Sigmoid colon (tissue), 7 donors: ENCODE measurements at regions of chr18 and their contacts with region 1.

Region 1: GRCh38 chr18:45014047-45014501 is 333.4 kb downstream of the SETBP1 start:
- DNase-seq: no peak
- H3K4me3 ChIP-seq: no peak overlapping the region
- H3K27ac ChIP-seq: peak overlapping the region in 3 of 4 donors; percentile 31 to 88 (median 86)
- H3K4me1 ChIP-seq: peaks cover 0 to 85% (median 54%) of the 10 kb centered on the region in 4 donors
- H3K27me3 ChIP-seq: no peaks in the 10 kb centered on the region
- CTCF ChIP-seq: peak in 2 of 4 experiments; percentile 8 to 27
- EP300 ChIP-seq: no peak
- POLR2A ChIP-seq: no peak

Region 2: GRCh38 chr18:44495151-44495550 is 518.9 kb before region 1 on chr18:
- intact Hi-C with region 1: loop called (anchors 10 kb)
- DNase-seq: no peak
- H3K4me3 ChIP-seq: no peak overlapping the region
- H3K27ac ChIP-seq: no peak overlapping the region
- H3K4me1 ChIP-seq: peaks cover 0 to 33% (median 25%) of the 10 kb centered on the region in 4 donors
- H3K27me3 ChIP-seq: no peaks in the 10 kb centered on the region
- CTCF ChIP-seq: no peak
- EP300 ChIP-seq: no peak
- POLR2A ChIP-seq: no peak

Region 3: GRCh38 chr18:44673256-44673880 is 340.7 kb before region 1 on chr18:
- intact Hi-C with region 1: no loop called
- DNase-seq: no peak
- H3K4me3 ChIP-seq: no peak overlapping the region
- H3K27ac ChIP-seq: no peak overlapping the region
- H3K4me1 ChIP-seq: peaks cover 0 to 14% (median 7%) of the 10 kb centered on the region in 4 donors
- H3K27me3 ChIP-seq: no peaks in the 10 kb centered on the region
- CTCF ChIP-seq: no peak
- EP300 ChIP-seq: no peak
- POLR2A ChIP-seq: no peak

Region 4: GRCh38 chr18:44826418-44827259 is 187.4 kb before region 1 on chr18:
- intact Hi-C with region 1: loop called (anchors 5 kb)
- DNase-seq: peak; percentile 95
- H3K4me3 ChIP-seq: no peak overlapping the region
- H3K27ac ChIP-seq: peak overlapping the region; percentile 75 to 84 (median 81)
- H3K4me1 ChIP-seq: peaks cover 0 to 77% (median 65%) of the 10 kb centered on the region in 4 donors
- H3K27me3 ChIP-seq: no peaks in the 10 kb centered on the region
- CTCF ChIP-seq: no peak
- EP300 ChIP-seq: no peak
- POLR2A ChIP-seq: no peak

Region 5: DNA sequence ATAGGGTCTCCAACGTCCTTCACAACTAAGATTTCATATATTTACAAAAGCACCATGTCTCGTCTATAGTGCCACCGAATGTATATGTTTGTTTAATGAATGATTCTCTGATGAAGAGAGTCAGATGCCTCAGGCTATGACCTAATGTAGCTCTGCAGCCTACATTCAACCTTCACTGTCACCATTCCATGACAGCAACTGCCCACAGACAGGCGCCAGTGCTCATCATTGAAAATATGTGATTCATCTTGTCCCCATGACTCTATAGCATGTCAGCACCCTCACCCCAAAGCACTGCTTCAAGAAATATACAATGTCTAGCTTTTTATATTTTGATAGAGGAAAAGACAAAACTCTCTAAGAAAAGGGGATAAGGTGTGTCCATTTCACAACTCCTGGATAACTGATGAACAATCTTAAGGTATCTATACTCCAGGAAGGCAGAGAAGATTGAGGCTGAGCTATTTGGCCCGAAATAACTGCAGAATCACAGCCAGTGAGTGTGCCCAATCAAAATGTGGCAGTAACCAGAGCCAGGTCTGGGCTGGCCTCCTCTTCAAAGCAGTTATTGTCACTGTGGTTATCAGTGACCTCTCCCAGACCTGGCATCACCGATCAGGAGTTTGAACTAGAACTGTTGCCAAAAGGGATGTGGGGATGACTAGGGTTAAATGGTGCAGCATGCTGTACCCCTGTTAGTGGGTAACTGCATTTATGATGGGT is 86.8 kb before region 1 on chr18:
- intact Hi-C with region 1: loop called (anchors 10 kb)
- DNase-seq: no peak
- H3K4me3 ChIP-seq: no peak overlapping the region
- H3K27ac ChIP-seq: no peak overlapping the region
- H3K4me1 ChIP-seq: peaks cover 0 to 16% (median 8%) of the 10 kb centered on the region in 4 donors
- H3K27me3 ChIP-seq: no peaks in the 10 kb centered on the region
- CTCF ChIP-seq: no peak
- EP300 ChIP-seq: no peak
- POLR2A ChIP-seq: no peak

Region 6: GRCh38 chr18:45106331-45106774 is 92.3 kb after region 1 on chr18:
- intact Hi-C with region 1: no loop called
- DNase-seq: no peak
- H3K4me3 ChIP-seq: no peak overlapping the region
- H3K27ac ChIP-seq: no peak overlapping the region
- H3K4me1 ChIP-seq: peaks cover 0 to 11% (median 10%) of the 10 kb centered on the region in 4 donors
- H3K27me3 ChIP-seq: no peaks in the 10 kb centered on the region
- CTCF ChIP-seq: no peak
- EP300 ChIP-seq: no peak
- POLR2A ChIP-seq: no peak